Posterior cingulate gyrus (tissue), 11 donors: ENCODE measurements at regions of chr5 and their contacts with region 1.

Region 1: DNA sequence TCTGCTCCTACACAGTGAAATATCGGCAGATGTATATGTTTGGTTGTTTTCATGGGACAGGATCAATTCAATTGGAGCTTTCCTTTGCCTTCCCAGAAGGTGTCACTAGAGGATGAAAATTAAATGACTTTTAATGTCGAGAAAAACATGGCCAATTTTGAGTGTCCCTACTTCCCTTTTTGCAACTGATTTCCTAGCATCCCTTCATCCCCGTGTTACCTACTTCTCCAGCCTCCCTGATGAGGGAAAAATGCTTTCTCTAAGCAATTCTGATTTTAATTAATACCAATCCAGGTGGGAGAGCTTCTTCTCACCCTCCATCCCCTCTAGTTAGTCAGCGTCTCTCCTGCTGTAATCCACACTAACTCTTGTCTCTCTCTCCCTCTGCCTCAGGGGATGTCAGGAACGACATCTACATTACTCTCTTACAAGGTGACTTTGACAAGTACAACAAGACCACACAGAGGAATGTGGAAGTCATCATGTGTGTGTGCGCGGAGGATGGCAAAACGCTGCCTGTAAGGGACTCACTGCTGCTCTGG is 64.9 kb downstream of the DOCK2 start:
- DNase-seq: no peak

Region 2: DNA sequence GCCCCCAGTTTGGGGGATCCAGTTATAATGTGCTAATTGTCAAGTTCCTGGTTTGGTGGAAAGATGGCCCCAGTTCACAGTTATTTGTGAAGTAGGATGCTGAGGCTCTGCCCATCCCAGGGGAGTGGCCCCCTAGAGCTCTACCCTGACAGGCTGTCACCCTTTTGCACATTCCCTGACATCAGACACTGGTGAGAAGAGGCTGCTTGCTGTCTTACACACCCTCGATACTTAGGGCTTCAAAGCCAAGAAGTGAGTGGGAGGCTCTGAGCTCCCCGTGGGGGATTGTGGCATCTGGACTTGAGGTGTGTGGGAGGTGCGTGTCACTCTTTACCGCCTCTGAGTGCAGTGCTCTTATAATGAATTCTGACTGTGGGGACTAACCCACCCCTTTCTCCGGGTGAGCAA is 103.5 kb after region 1 on chr5:
- intact Hi-C with region 1: no loop called
- DNase-seq: peak in 1 of 10 donors; percentile 30

Region 3: DNA sequence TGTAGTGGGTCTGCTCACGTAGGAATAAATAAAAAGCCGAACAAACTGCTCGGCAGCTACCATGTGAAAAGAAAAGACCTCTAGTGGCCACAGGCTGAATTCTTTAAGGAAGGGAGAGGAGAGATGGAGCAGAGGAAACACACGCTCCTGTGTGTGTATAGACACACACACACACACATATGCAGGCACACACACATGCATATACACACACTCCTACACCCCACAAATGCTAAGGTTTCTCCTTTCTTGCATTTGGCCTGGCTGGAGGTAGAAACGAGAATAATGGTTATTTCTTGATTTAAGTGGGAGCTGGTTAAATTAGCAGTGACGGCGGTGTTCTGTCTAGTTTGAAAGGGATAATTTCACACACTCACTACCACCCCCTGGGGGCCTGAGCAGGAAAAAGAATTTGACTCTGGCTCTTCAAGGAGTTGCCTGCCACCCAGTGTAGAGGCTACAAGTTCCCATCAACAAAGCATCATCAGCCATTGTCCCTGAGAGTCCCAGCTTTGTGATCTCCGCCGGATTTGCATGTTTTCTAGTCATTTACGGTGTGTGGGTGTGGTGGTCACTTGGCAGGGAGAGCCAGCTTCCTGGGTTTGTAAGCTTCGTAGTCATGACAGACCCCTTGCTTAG is 278.6 kb after region 1 on chr5 and contains the start of gene INSYN2B:
- intact Hi-C with region 1: loop called (anchors 1 kb)
- DNase-seq: peak in 9 of 10 donors; percentile 54 to 96 (median 83)